ENCODE measurements at regions of chr3 and their contacts with region 1.

Region 1: DNA sequence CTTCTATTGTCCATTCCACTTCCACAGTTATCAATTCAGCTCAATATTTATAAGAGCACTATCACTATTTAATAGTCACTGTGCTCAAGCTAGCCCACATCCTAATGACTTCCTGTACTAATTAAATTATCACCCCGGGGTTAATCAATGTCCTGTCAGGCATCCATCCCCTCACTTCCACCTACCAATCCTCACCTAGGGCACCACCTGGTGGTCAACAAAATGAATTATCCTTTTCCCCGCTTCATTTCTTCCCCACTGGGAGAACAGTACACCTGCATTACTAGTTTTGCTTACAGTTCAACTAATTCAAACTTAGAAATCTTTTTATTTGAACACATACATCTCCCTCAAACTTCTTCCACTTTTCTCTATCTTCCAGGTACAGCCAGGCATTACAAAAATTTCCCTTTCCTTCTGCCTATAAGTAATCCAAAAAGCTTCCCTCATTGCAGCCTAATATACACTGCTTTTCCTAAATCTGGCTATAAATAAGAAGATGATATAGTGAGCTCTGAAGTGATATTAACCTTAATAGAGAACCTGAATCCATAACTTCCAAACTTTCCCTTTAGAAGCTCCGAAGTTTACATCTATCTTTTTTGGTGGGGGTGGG is 68.5 kb downstream of the TMCC1 start:
- DNase-seq: no peak
- ATAC-seq: no peak
- H3K4me3 ChIP-seq: no peak overlapping the region
- H3K27ac ChIP-seq: no peak overlapping the region
- H3K4me1 ChIP-seq: no peaks in the 10 kb centered on the region
- H3K27me3 ChIP-seq: no peaks in the 10 kb centered on the region

Region 2: GRCh38 chr3:129383292-129383860 is 441.7 kb before region 1 on chr3:
- intact Hi-C with region 1: loop called in 1 of 2 experiments (anchors 10 kb)
- DNase-seq: peak in 1 of 2 donors; percentile 65
- ATAC-seq: peak; percentile 79
- H3K4me3 ChIP-seq: no peak overlapping the region
- H3K27ac ChIP-seq: no peak overlapping the region
- H3K4me1 ChIP-seq: no peaks in the 10 kb centered on the region
- H3K27me3 ChIP-seq: no peaks in the 10 kb centered on the region

Region 3: DNA sequence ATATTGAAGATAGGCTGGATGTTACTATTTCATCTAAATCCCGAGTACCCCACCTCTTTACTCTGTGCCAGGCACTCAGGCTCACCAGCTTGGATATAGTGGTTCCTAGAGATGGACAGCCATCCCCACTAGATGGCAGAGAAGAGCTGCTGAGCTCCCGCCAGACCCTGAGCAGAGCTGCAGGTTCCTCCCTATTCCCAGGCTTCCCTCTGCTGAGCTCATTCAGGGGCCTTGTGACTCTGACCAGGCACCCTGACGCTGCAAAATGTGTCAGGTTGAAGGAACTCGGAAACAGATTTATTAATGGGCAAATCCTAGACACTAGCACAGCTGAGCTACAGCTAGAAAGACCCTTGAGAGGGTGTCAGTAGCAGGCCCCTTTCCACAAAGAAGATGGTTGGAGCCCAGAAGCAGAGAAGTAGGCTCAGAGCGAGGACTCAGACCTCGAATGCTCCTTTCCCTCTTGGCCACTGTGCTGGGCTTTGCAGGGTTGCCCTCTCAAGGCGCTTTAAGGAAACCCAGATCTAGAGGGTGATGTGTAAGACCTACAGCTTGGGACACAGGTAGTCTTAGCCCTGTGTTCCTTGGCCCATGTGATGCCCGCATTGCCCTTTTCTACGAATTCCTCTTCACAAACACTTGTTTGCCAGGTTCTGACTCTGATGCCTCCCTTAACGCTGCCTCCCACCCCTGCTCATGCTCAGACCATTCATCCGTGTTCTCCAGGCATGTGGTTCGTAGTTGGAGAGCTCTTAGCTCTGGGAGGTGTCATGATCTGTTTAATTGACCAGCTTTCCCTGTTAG is 334.6 kb before region 1 on chr3:
- intact Hi-C with region 1: loop called (anchors 2 to 5 kb)
- DNase-seq: peak; percentile 92 to 95
- ATAC-seq: peak; percentile 92
- H3K4me3 ChIP-seq: no peak overlapping the region
- H3K27ac ChIP-seq: peak overlapping the region; percentile 62 to 86
- H3K4me1 ChIP-seq: peaks cover 0 to 2% of the 10 kb centered on the region in 2 donors
- H3K27me3 ChIP-seq: no peaks in the 10 kb centered on the region

Region 4: DNA sequence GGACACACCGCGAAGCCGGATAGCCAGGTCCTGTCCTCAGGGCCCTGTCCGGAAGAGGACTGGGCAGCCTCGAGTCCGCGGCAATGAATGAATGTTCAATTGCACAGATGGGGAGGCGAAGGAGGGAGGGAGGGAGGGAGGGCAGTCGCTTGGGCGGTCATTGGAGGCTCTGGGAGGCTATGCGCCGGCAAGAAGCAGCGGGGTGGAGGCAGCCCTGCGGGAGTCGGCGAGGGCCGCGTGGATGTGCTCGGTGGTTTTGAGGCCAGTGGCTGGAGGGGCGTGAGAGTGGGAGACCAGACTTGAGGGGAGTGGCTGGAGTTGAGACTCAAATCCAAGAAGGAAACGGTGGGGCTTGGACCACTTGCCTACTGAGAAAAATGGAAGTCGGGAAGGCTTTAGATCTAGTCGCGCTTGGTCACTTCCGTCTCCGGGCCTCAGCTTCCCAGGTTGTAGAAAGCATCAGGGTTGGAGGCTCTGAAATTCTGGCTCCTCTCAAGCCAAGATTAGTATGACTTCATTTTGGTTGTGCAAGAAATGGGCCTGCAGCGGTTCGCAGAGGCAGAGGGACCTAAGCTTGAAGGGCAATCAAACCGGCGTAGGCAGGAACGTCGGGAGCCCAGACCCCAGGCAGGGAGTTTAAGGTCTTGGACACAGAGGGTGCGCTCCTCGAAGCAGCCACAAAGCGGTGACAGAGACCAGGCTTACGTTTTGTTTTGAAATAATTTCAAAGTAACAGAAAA is 197.4 kb before region 1 on chr3:
- intact Hi-C with region 1: loop called in 1 of 2 experiments (anchors 5 kb)
- DNase-seq: peak; percentile 87 to 88
- ATAC-seq: peak; percentile 76
- H3K4me3 ChIP-seq: peak overlapping the region; percentile 5 to 36
- H3K27ac ChIP-seq: peak overlapping the region; percentile 77 to 98
- H3K4me1 ChIP-seq: no peaks in the 10 kb centered on the region
- H3K27me3 ChIP-seq: no peaks in the 10 kb centered on the region

Region 5: GRCh38 chr3:129650256-129650872 is 174.7 kb before region 1 on chr3:
- intact Hi-C with region 1: loop called (anchors 2 to 5 kb)
- DNase-seq: peak in 1 of 2 donors; percentile 75
- ATAC-seq: peak; percentile 81
- H3K4me3 ChIP-seq: no peak overlapping the region
- H3K27ac ChIP-seq: no peak overlapping the region
- H3K4me1 ChIP-seq: peaks cover 0 to 5% of the 10 kb centered on the region in 2 donors
- H3K27me3 ChIP-seq: no peaks in the 10 kb centered on the region

Region 6: GRCh38 chr3:129934234-129935123 is 109.4 kb after region 1 on chr3:
- intact Hi-C with region 1: loop called (anchors 5 to 10 kb)
- DNase-seq: no peak
- ATAC-seq: peak; percentile 58
- H3K4me3 ChIP-seq: no peak overlapping the region
- H3K27ac ChIP-seq: no peak overlapping the region
- H3K4me1 ChIP-seq: no peaks in the 10 kb centered on the region
- H3K27me3 ChIP-seq: peaks cover 0 to 2% of the 10 kb centered on the region in 2 donors